PC-9 (cell line): ENCODE measurements at regions of chrX and their contacts with region 1.

Region 1: DNA sequence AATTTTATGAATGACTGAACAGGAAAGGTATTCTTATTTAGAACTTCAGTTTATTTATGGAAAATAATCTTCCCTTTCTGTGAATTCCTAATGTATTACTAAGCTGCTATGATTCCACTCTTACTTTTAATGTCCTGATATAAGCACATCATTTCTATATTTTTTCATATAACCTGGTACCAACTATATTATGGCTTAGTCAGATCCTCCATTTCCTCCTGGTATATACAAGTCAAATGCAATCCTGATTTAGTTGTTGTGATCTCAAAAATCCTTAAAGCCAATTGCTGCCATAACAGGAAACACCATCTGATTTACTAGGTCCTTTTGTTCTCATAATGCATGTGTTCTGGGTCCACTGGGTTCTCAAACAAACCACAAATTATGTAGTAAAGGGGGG is 26.8 kb downstream of the TRMT2B start:
- DNase-seq: no peak
- H3K4me3 ChIP-seq: no peak overlapping the region
- H3K27ac ChIP-seq: no peak overlapping the region
- H3K4me1 ChIP-seq: no peaks in the 10 kb centered on the region
- H3K27me3 ChIP-seq: no peaks in the 10 kb centered on the region
- CTCF ChIP-seq: no peak

Region 2: DNA sequence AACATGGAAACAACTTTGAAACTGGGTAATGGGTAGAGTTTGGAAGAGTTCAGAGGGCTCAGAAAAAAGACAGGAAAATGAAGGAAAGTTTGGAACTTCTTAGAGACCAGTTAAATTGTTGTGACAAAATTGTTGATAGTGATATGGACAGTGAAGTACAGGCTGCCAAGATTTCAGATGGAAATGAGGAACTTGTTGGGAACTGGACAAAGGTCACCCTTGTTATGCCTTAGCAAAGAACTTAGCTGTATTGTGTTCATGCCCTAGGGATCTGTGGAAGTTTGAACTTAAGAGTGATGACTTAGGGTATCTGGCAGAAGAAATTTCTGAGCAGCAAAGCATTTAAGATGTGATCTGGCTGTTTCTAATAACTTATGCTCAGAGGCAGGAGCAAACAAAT is 60.8 kb before region 1 on chrX:
- CTCF ChIA-PET with region 1: no interaction called
- POLR2A ChIA-PET with region 1: interaction called, 12 read pairs
- intact Hi-C with region 1: no loop called
- DNase-seq: no peak
- H3K4me3 ChIP-seq: no peak overlapping the region
- H3K27ac ChIP-seq: no peak overlapping the region
- H3K4me1 ChIP-seq: no peaks in the 10 kb centered on the region
- H3K27me3 ChIP-seq: no peaks in the 10 kb centered on the region
- CTCF ChIP-seq: no peak

Region 3: GRCh38 chrX:101108284-101108683 is 83.2 kb after region 1 on chrX:
- CTCF ChIA-PET with region 1: no interaction called
- POLR2A ChIA-PET with region 1: no interaction called
- intact Hi-C with region 1: no loop called
- DNase-seq: no peak
- H3K4me3 ChIP-seq: no peak overlapping the region
- H3K27ac ChIP-seq: no peak overlapping the region
- H3K4me1 ChIP-seq: no peaks in the 10 kb centered on the region
- H3K27me3 ChIP-seq: no peaks in the 10 kb centered on the region
- CTCF ChIP-seq: no peak